PC-3 (cell line): ENCODE measurements at regions of chr7 and their contacts with region 1.

Region 1: GRCh38 chr7:55427800-55428199 is 62.7 kb downstream of the LANCL2 start:
- DNase-seq: no peak
- ATAC-seq: no peak
- H3K4me3 ChIP-seq: no peak overlapping the region
- H3K27ac ChIP-seq: no peak overlapping the region
- H3K4me1 ChIP-seq: no peaks in the 10 kb centered on the region
- H3K27me3 ChIP-seq: no peaks in the 10 kb centered on the region
- CTCF ChIP-seq: no peak

Region 2: DNA sequence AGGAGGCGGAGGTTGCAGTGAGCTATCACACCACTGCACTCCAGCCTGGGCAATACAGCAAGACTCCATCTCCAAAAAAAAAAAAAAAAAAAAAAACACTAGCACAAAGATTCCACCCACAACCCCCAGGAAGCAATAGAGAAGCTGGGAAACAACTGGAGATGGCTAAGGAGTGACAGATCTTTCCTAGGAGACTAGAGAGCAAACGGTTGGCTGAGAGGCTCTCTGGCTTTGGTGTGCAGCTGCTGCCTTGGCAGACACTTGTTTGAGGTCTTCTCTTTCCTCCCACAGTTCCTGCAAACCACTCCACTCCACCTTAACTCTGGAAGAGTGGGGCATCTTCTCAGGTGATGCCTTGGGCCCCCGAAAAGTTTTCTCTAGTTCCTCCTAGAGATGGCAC is 141.1 kb before region 1 on chr7:
- CTCF ChIA-PET with region 1: no interaction called
- POLR2A ChIA-PET with region 1: interaction called, 11 read pairs
- intact Hi-C with region 1: no loop called
- DNase-seq: no peak
- ATAC-seq: no peak
- H3K4me3 ChIP-seq: no peak overlapping the region
- H3K27ac ChIP-seq: no peak overlapping the region
- H3K4me1 ChIP-seq: no peaks in the 10 kb centered on the region
- H3K27me3 ChIP-seq: peaks cover 16% of the 10 kb centered on the region; the same call in 1 of the 2 replicates
- CTCF ChIP-seq: no peak

Region 3: DNA sequence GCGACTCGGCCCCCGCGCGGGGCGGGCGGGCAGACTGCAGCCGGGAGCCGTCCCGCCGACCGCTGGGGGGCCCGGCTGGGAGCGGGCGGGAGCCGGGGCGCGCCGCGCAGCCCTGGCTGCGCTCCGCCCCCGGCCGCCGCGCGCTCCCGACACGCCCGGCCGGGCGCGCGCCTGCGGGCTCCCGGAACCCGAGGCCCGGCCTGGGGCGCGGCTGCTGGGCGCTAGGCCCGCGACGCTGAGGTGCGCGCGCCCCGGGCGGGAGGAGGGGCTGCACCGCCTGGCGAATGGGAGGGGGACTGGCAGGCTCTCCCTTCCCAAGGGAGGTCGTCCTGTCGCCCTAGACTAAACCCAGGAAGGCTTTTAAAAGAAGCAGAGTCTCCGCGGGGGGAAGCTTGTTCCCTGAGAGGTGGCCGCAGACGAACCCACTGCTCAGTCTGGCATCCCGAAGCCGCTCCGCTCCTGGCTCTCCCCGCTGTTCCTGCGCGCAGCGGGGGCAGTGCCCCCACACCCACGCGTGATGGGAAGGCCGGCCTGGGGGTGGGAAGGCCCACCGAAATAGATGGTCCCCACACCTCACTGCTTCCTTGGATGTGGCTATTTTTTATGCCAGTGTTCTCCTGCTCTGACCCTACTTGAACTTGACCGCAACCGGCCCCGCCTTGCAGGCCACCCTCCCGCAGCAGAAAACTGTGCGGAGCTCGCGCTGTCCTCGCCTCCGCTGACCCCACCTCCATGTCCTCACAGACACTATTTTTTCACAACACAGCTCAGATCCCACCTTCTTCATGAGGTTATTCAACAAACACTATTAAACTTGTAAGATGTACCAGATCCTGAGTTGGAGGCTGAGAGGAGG is 144.8 kb after region 1 on chr7 and contains the start of gene VOPP1:
- CTCF ChIA-PET with region 1: no interaction called
- POLR2A ChIA-PET with region 1: no interaction called
- intact Hi-C with region 1: no loop called
- DNase-seq: peak; percentile 72
- ATAC-seq: peak; percentile 65
- H3K4me3 ChIP-seq: peak within 1 kb of the TSS; percentile 83
- H3K27ac ChIP-seq: peak within 1 kb of the TSS; percentile 71
- H3K4me1 ChIP-seq: peaks cover 25% of the 10 kb centered on the region
- H3K27me3 ChIP-seq: no peaks in the 10 kb centered on the region
- CTCF ChIP-seq: no peak
- total RNA-seq, gene VOPP1: 60.2 and 64.8 TPM in 2 replicates